ENCODE measurements at regions of chr2 and their contacts with region 1.

Region 1: DNA sequence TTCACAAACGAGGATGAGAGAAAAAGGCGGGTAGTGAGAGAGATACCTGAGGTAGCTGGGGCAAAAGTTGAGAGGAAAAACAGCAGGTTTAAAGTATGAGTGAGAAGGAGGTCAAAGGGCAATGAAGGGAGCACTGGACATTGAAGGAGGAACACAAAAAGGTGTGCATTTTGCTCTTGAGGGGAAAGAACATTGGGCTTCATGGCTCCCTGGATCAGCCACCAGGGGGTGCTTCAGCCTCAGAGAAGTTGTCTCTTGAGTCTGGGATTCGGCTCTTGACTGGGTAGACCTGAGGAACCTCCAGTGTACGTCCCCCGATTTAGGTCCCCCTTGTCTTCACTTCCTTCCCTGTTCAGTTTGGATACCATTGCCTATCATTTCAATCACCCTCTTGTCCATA is 128.5 kb downstream of the RAPGEF4 start:
- DNase-seq: peak; percentile 29
- H3K4me3 ChIP-seq: no peak overlapping the region
- H3K27ac ChIP-seq: no peak overlapping the region
- H3K4me1 ChIP-seq: peaks cover 20% of the 10 kb centered on the region
- H3K27me3 ChIP-seq: no peaks in the 10 kb centered on the region
- CTCF ChIP-seq: peak; percentile 66 to 68
- POLR2A ChIP-seq: no peak

Region 2: DNA sequence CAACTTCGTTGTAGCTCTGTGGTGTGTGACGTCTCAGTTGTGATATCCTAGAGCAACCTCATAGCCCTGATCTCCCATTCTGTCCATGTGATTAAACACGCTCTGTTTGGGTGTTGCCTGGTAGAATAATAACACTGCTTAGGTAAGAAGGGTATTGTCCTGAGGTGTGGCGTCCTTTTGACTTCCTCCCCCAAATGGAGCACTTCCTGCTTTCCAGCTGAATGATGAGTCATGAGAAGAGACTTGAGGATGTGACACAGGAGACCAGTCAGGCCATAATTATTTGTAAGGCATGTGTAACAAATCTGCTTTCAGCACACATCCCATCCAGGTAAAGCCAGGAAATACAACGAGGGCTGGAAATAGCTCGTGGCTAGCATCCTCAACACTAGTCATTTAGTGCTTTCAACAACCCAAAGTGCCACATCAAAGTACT is 27.8 kb before region 1 on chr2:
- CTCF ChIA-PET with region 1: interaction called, 3 read pairs
- POLR2A ChIA-PET with region 1: no interaction called
- dilution Hi-C with region 1: no loop called
- intact Hi-C with region 1: loop called (anchors 1 kb)
- DNase-seq: peak; percentile 88
- H3K4me3 ChIP-seq: no peak overlapping the region
- H3K27ac ChIP-seq: peak overlapping the region; percentile 67
- H3K4me1 ChIP-seq: peaks cover 28% of the 10 kb centered on the region
- H3K27me3 ChIP-seq: no peaks in the 10 kb centered on the region
- CTCF ChIP-seq: no peak
- POLR2A ChIP-seq: no peak

Region 3: DNA sequence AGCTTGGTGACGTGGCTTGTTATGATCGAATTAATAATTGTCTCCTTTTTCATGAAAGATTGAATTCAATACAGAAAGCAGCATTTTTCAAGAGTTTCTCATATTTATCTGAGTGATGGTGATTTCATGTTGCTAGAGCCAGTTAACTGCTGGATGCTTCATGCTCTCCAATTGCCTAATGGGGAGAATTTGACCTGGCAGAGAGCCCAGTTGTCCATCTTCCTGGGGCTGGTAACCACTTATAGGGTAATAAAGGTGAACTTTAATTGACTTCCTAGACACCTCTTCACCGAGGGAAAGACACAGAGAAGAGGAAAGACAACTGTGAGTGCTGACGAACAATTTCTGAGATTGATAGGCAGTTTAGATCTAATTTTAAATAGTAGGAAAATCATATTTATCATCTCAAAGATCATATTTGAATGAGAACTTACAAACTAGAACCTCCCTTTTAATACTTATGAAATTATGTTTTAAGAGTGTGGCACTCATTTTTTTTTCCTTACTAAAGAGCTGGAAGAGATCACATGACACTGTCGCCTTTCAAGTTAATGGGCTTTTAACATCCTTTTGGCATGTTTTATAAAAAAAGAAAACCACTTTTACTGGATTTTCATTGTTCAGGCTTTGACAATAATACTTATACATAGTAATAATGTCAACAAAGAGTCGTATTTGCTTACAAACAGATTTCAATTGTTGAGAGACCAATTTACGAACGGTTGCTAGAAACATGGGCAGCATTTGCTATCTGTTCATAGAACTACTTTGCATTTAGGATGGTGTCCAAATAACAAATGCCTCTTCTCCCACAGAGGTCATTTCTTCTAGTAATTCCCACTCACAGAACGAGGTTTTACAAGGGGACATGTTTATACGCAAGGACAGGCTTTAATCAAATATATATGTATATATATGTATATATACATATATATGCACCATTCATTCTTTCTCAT is 24.8 kb after region 1 on chr2:
- CTCF ChIA-PET with region 1: no interaction called
- POLR2A ChIA-PET with region 1: no interaction called
- dilution Hi-C with region 1: no loop called
- intact Hi-C with region 1: no loop called
- DNase-seq: no peak
- H3K4me3 ChIP-seq: no peak overlapping the region
- H3K27ac ChIP-seq: no peak overlapping the region
- H3K4me1 ChIP-seq: no peaks in the 10 kb centered on the region
- H3K27me3 ChIP-seq: peaks cover 0 to 1% of the 10 kb centered on the region in 2 experiments
- CTCF ChIP-seq: no peak
- POLR2A ChIP-seq: no peak

Region 4: GRCh38 chr2:173021939-173022371 is 157.8 kb after region 1 on chr2:
- CTCF ChIA-PET with region 1: interaction called, 14 read pairs
- POLR2A ChIA-PET with region 1: no interaction called
- dilution Hi-C with region 1: no loop called
- intact Hi-C with region 1: loop called (anchors 1 kb)
- DNase-seq: peak; percentile 18
- H3K4me3 ChIP-seq: no peak overlapping the region
- H3K27ac ChIP-seq: no peak overlapping the region
- H3K4me1 ChIP-seq: no peaks in the 10 kb centered on the region
- H3K27me3 ChIP-seq: peaks cover 0 to 2% of the 10 kb centered on the region in 2 experiments
- CTCF ChIP-seq: peak; percentile 8 to 23
- POLR2A ChIP-seq: no peak

Region 5: GRCh38 chr2:173427887-173428600 is 563.9 kb after region 1 on chr2:
- CTCF ChIA-PET with region 1: no interaction called
- POLR2A ChIA-PET with region 1: no interaction called
- dilution Hi-C with region 1: no loop called
- intact Hi-C with region 1: no loop called
- DNase-seq: no peak
- H3K4me3 ChIP-seq: no peak overlapping the region
- H3K27ac ChIP-seq: no peak overlapping the region
- H3K4me1 ChIP-seq: no peaks in the 10 kb centered on the region
- H3K27me3 ChIP-seq: peaks cover 0 to 2% of the 10 kb centered on the region in 2 experiments
- CTCF ChIP-seq: no peak
- POLR2A ChIP-seq: no peak

Measured in endothelial cell of umbilical vein (primary cell).